Activated T-helper 2 cell treated with anti-CD3 and anti-CD28 coated beads, Interferon-gamma antibody, Interleukin-2, Interleukin-4, amounts not matched to agents 10 μg/mL and 5 μg/mL and 100 μg/mL, durations not matched to agents 14 hours and 24 hours and 36 hours (primary cell): ENCODE measurements at regions of chr12 and their contacts with region 1.

Region 1: GRCh38 chr12:24838531-24838950 is 110.4 kb downstream of the BCAT1 start:
- DNase-seq: peak; percentile 13
- H3K4me3 Mint-ChIP-seq: peak overlapping the region; percentile 2
- H3K27ac Mint-ChIP-seq: peak overlapping the region; percentile 77
- H3K4me1 Mint-ChIP-seq: peaks cover 44% of the 10 kb centered on the region
- H3K27me3 Mint-ChIP-seq: no peaks in the 10 kb centered on the region

Region 2: GRCh38 chr12:24596768-24597388 is 241.7 kb before region 1 on chr12:
- intact Hi-C with region 1: loop called (anchors 5 kb)
- DNase-seq: no peak
- H3K4me3 Mint-ChIP-seq: no peak overlapping the region
- H3K27ac Mint-ChIP-seq: no peak overlapping the region
- H3K4me1 Mint-ChIP-seq: peaks cover 3% of the 10 kb centered on the region
- H3K27me3 Mint-ChIP-seq: no peaks in the 10 kb centered on the region

Region 3: GRCh38 chr12:24795699-24796385 is 42.7 kb before region 1 on chr12:
- intact Hi-C with region 1: loop called (anchors 2 kb)
- DNase-seq: no peak
- H3K4me3 Mint-ChIP-seq: peak overlapping the region; percentile 77
- H3K27ac Mint-ChIP-seq: peak overlapping the region; percentile 60
- H3K4me1 Mint-ChIP-seq: peaks cover 38% of the 10 kb centered on the region
- H3K27me3 Mint-ChIP-seq: peaks cover 4% of the 10 kb centered on the region

Region 4: GRCh38 chr12:24919346-24920001 is 80.9 kb after region 1 on chr12:
- intact Hi-C with region 1: loop called (anchors 1 kb)
- DNase-seq: no peak
- H3K4me3 Mint-ChIP-seq: no peak overlapping the region
- H3K27ac Mint-ChIP-seq: no peak overlapping the region
- H3K4me1 Mint-ChIP-seq: peaks cover 28% of the 10 kb centered on the region
- H3K27me3 Mint-ChIP-seq: peaks cover 20% of the 10 kb centered on the region

Region 5: GRCh38 chr12:25135531-25136154 is 297.1 kb after region 1 on chr12:
- intact Hi-C with region 1: no loop called
- DNase-seq: no peak
- H3K4me3 Mint-ChIP-seq: no peak overlapping the region
- H3K27ac Mint-ChIP-seq: no peak overlapping the region
- H3K4me1 Mint-ChIP-seq: no peaks in the 10 kb centered on the region
- H3K27me3 Mint-ChIP-seq: peaks cover 24% of the 10 kb centered on the region

Region 6: GRCh38 chr12:25186788-25187397 is 348.4 kb after region 1 on chr12:
- intact Hi-C with region 1: loop called (anchors 5 kb)
- DNase-seq: no peak
- H3K4me3 Mint-ChIP-seq: peak overlapping the region; percentile 14
- H3K27ac Mint-ChIP-seq: no peak overlapping the region
- H3K4me1 Mint-ChIP-seq: peaks cover 22% of the 10 kb centered on the region
- H3K27me3 Mint-ChIP-seq: no peaks in the 10 kb centered on the region